ENCODE measurements at regions of chr16 and their contacts with region 1.

Region 1: GRCh38 chr16:66872943-66873684 is 7.2 kb upstream of the PDP2 start:
- DNase-seq: peak; percentile 99 to 100 (median 100)
- H3K4me3 ChIP-seq: peak overlapping the region in 5 of 7 experiments; percentile 32 to 71 (median 45)
- H3K27ac ChIP-seq: peak overlapping the region in 1 of 2 experiments; percentile 40
- H3K4me1 ChIP-seq: peaks cover 0 to 24% (median 14%) of the 10 kb centered on the region in 4 experiments
- H3K27me3 ChIP-seq: no peaks in the 10 kb centered on the region

Region 2: GRCh38 chr16:66798161-66798560 is 75.0 kb before region 1 on chr16:
- CTCF ChIA-PET with region 1: no interaction called
- POLR2A ChIA-PET with region 1: no interaction called
- DNase-seq: no peak
- H3K4me3 ChIP-seq: no peak overlapping the region
- H3K27ac ChIP-seq: no peak overlapping the region
- H3K4me1 ChIP-seq: no peaks in the 10 kb centered on the region
- H3K27me3 ChIP-seq: no peaks in the 10 kb centered on the region

Region 3: GRCh38 chr16:66824006-66824405 is 49.1 kb before region 1 on chr16:
- CTCF ChIA-PET with region 1: interaction called, 91 read pairs
- POLR2A ChIA-PET with region 1: no interaction called
- DNase-seq: no peak
- H3K4me3 ChIP-seq: no peak overlapping the region
- H3K27ac ChIP-seq: no peak overlapping the region
- H3K4me1 ChIP-seq: peaks cover 0 to 4% (median 2%) of the 10 kb centered on the region in 4 experiments
- H3K27me3 ChIP-seq: no peaks in the 10 kb centered on the region

Region 4: GRCh38 chr16:66844342-66845079 is 28.6 kb before region 1 on chr16 and contains the start of gene CA7:
- CTCF ChIA-PET with region 1: interaction called, 67 read pairs
- POLR2A ChIA-PET with region 1: interaction called, 6 read pairs
- DNase-seq: peak in 1 of 3 donors; percentile 44
- H3K4me3 ChIP-seq: peak within 1 kb of the TSS in 6 of 7 experiments; percentile 36 to 71 (median 54)
- H3K27ac ChIP-seq: no peak within 1 kb of the TSS
- H3K4me1 ChIP-seq: peaks cover 0 to 14% (median 11%) of the 10 kb centered on the region in 4 experiments
- H3K27me3 ChIP-seq: peaks cover 0 to 43% (median 26%) of the 10 kb centered on the region in 5 experiments

Region 5: DNA sequence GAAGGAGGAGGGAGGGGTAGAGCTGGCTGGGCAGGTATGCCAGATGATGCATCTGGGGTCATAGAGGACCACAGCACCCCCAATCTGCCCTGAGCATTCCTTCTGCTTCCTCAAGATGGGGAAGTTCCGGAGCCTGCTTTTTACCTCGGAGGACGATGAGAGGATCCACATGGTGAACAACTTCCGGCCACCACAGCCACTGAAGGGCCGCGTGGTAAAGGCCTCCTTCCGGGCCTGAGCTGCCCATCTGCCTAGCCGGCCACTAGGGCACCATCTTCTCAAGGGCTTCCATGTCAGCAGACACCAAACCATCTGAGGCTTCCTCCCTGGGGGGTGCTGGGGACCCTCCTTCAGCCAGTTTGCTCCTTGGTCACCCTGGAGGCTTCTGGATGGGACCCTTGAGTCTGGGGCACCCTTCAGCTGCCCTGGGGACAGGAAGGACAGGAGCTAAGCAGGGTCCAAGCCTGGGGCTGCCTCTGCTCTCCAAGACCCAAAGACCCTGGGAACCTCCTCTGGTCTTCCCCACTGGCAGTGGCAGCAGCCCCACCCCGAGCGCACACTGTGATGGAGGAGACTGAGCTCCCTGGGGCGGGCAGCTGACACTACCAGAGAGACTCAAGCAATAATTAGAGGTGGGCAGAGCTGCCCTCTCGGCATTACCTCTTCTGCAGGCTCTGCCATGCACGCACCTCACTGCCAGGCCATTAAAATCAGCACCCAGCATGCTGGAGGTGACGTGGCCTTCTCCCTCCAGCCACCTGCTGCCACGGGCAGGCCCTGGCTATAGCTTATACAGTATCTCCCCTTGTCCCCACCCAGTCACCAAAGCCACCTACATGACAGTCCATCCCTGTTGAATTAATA is 19.6 kb before region 1 on chr16:
- CTCF ChIA-PET with region 1: interaction called, 73 read pairs
- POLR2A ChIA-PET with region 1: interaction called, 6 read pairs
- DNase-seq: peak; percentile 73 to 94 (median 92)
- H3K4me3 ChIP-seq: no peak overlapping the region
- H3K27ac ChIP-seq: no peak overlapping the region
- H3K4me1 ChIP-seq: peaks cover 0 to 13% (median 9%) of the 10 kb centered on the region in 4 experiments
- H3K27me3 ChIP-seq: peaks cover 0 to 9% (median 0%) of the 10 kb centered on the region in 5 experiments